ENCODE measurements at regions of chr2 and their contacts with region 1.

Region 1: GRCh38 chr2:175366815-175367214 is 185.3 kb upstream of the ATP5MC3 start:
- DNase-seq: peak; percentile 68
- H3K4me3 Mint-ChIP-seq: no peak overlapping the region
- H3K27ac Mint-ChIP-seq: no peak overlapping the region
- H3K4me1 Mint-ChIP-seq: no peaks in the 10 kb centered on the region
- H3K27me3 Mint-ChIP-seq: peaks cover 49% of the 10 kb centered on the region
- CTCF ChIP-seq: peak; percentile 73

Region 2: DNA sequence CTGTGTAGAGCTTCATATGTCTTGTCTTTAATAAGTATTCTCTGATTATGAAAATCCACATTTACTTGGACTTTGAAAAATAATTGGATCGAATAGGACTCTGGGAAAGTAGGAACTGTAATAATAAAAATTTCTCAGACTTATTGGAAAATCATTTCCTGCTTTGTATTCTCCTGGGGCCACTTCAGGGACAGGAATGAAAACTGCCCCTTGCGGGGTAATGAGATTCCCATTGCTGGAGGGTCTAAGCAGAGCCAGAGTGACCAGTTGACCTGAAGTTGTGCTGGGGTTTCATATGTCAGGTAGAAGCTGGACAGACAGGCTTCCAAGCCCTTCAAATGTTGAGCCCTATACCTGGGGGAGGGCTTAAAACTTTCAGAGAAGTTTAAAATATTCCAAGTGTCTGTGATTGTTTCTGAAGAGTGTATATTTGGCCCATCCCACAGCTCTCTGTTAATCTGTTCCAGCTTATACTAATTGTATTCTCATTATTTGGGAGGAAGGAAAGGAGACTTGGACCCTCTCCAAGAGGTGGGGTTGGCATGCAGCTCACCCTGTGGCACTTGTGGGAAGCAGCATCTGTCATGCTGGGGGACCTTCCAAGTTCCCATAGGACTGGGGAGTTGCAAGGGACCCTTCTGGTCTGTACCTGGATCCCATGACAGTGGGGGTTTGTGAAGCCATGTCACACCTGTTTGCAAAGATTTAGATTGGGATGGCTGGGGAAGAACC is 83.4 kb after region 1 on chr2:
- CTCF ChIA-PET with region 1: no interaction called
- POLR2A ChIA-PET with region 1: no interaction called
- intact Hi-C with region 1: no loop called
- DNase-seq: no peak
- H3K4me3 Mint-ChIP-seq: no peak overlapping the region
- H3K27ac Mint-ChIP-seq: no peak overlapping the region
- H3K4me1 Mint-ChIP-seq: no peaks in the 10 kb centered on the region
- H3K27me3 Mint-ChIP-seq: no peaks in the 10 kb centered on the region
- CTCF ChIP-seq: no peak

Region 3: DNA sequence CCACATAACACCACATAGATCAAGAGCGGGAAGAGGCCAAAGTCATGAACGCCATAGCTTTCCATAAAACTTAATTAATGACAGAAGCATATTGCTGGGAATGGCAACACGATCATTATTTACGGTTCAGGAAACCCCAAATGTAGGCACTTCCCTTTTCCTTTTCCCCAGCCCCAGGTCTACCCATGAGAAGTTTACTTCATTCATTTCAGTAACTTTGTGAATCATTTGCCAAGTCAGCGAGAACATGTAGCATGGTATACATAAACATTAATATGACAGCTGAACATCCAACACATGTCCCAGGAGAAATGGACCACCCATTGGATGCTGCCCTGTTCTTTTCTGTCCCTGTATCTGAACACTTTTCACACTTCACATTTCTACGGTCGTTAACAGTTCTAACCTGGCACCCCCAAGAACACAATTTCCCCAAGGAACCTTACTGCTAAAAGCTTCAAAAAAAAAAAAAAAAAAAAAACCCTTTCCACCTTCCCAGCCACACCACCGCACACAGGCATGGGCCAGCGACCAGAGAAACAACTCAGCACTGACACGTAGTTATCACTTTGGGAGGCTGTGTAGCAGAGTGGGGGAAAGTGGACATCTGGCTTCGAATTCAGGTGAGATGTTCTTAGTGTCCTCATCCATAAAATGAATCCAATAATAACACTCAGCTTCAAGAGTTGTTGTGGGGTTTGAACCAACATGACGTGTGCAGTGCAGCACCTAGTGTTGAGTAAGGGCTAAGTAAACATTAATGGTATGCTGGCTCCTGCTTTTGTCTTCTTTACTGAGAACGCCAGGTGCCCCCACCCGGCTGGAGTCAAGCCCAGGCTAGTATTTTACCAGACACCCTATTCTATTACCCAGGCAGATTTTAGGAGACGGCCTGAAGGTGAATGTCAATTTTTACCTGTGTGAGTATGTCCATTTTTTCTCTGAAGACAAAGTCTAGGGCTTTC is 263.7 kb after region 1 on chr2:
- CTCF ChIA-PET with region 1: interaction called, 5 read pairs
- POLR2A ChIA-PET with region 1: interaction called, 5 read pairs
- intact Hi-C with region 1: loop called (anchors 5 kb)
- DNase-seq: peak; percentile 74
- H3K4me3 Mint-ChIP-seq: no peak overlapping the region
- H3K27ac Mint-ChIP-seq: peak overlapping the region; percentile 86
- H3K4me1 Mint-ChIP-seq: peaks cover 18% of the 10 kb centered on the region
- H3K27me3 Mint-ChIP-seq: peaks cover 3% of the 10 kb centered on the region
- CTCF ChIP-seq: peak; percentile 12

Region 4: DNA sequence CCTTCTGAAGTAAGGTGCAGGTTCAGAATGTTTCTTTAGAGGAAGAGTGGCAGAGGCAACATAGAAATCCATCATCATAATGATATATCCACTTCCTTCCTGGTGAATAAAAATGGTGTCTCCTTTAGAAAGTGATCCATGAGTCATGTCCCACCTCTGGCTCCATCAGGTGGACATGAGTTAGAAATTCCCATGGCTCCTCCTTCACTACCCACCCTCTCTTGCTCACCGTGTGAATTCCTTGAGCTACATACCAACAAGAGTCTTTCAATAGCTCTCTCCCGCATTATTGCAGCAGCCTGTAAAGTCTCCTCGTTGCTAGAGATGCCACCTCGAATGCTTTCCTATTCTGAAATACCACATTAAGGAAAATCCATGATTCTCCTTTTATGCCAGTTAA is 317.6 kb after region 1 on chr2:
- CTCF ChIA-PET with region 1: interaction called, 16 read pairs
- POLR2A ChIA-PET with region 1: interaction called, 4 read pairs
- intact Hi-C with region 1: loop called (anchors 5 kb)
- DNase-seq: no peak
- H3K4me3 Mint-ChIP-seq: no peak overlapping the region
- H3K27ac Mint-ChIP-seq: no peak overlapping the region
- H3K4me1 Mint-ChIP-seq: no peaks in the 10 kb centered on the region
- H3K27me3 Mint-ChIP-seq: peaks cover 56% of the 10 kb centered on the region
- CTCF ChIP-seq: no peak

Measured in MCF 10A (cell line).